ENCODE measurements at regions of chr15 and their contacts with region 1.

Region 1: DNA sequence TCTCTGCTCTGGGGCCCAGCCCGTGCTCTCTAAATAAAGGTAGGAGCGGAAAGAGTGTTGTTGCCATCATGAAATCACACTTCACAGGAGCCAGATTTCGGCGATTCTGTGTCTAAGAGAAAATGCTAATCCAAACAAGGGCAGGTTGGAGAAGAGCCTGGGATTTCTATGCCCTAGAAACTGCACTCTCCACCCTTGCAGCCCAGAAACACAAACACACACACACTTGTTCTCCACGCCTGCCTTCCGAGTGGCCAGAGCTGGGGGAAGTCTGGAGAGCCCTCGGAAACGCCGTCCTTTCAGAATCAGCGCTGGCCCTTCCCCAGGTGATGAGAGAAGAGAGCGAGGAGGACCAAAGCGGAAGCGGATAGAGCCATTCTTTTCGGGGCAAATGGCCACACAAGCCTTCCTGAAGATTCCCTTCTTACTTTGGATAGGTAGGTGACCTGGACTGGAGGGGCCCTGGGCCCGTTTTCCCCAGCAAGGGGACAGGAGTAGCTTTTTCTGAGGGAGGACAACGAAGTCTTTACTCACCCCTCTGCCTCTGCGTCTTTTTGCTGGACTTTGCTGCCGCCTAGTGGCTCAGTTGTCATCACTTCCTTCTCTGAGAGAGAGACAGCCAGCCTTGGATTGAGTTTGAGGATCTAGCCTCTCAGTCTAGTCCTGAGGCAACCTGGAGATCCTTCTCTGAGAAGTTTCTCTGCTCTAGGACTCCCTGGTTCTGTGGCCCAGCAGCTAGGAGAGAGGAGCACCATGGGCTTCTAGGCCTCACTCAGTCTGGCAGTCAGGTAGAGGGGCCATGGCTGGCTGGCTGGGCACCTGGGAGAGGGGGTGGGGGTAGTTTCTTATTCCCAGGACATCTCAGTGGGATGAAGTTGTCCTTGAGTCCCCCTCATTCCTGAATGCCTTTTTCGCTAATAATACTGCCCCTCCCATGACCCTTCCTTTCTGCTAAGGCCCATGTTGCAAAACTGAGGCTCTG is 37.7 kb downstream of the SENP8 start:
- DNase-seq: peak; percentile 60 to 84 (median 66)
- H3K4me3 ChIP-seq: peak overlapping the region; percentile 61
- H3K4me3 Mint-ChIP-seq: peak overlapping the region; percentile 68 to 85 (median 78)
- H3K27ac ChIP-seq: no peak overlapping the region
- H3K27ac Mint-ChIP-seq: peak overlapping the region in 4 of 8 donors; percentile 55 to 91 (median 80)
- H3K4me1 ChIP-seq: no peaks in the 10 kb centered on the region
- H3K4me1 Mint-ChIP-seq: peaks cover 2 to 5% (median 5%) of the 10 kb centered on the region in 3 donors
- H3K27me3 ChIP-seq: no peaks in the 10 kb centered on the region
- H3K27me3 Mint-ChIP-seq: peaks cover under 1 to 2% of the 10 kb centered on the region in 2 donors

Region 2: GRCh38 chr15:71743861-71744382 is 412.0 kb before region 1 on chr15:
- CTCF ChIA-PET with region 1: interaction called, 31 read pairs
- POLR2A ChIA-PET with region 1: no interaction called
- DNase-seq: peak; percentile 29 to 66 (median 39)
- H3K4me3 ChIP-seq: no peak overlapping the region
- H3K4me3 Mint-ChIP-seq: no peak overlapping the region
- H3K27ac ChIP-seq: no peak overlapping the region
- H3K27ac Mint-ChIP-seq: no peak overlapping the region
- H3K4me1 ChIP-seq: no peaks in the 10 kb centered on the region
- H3K4me1 Mint-ChIP-seq: peaks cover 0 to 5% (median 3%) of the 10 kb centered on the region in 3 donors
- H3K27me3 ChIP-seq: no peaks in the 10 kb centered on the region
- H3K27me3 Mint-ChIP-seq: peaks cover 4% of the 10 kb centered on the region in 2 donors

Region 3: DNA sequence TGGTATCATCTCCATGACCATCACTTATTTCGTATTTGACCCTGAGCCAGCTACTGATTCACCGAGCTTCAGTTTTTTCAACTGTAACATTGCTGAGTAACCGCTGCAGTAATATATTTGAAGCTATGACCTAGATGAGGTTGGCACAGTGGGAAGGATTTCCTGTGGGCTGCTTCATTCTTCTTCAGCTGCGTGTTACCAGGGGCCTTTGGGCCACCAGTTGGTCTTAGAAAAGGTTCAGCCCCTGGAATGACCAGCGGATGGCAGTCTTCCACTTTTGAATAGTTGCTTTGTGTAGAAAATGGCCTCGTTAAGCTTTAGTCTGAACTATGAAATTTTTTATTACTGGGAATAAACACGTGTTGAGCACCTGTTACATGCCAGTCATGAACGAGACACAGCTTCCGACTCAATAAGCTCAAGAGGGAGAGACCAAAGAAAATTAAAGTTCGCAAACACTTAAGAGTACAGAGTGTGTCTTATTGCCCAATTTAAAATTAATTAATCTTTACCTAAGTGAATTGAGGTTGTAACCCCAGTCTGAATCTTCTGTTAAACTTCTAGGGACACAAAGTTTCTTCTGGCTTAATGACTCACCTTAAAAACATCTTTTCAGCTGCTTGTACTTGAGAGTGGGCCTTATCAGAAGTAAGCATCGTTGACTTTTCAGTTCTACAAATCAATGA is 403.2 kb before region 1 on chr15:
- CTCF ChIA-PET with region 1: interaction called, 11 read pairs
- POLR2A ChIA-PET with region 1: no interaction called
- DNase-seq: no peak
- H3K4me3 ChIP-seq: no peak overlapping the region
- H3K4me3 Mint-ChIP-seq: no peak overlapping the region
- H3K27ac ChIP-seq: no peak overlapping the region
- H3K27ac Mint-ChIP-seq: no peak overlapping the region
- H3K4me1 ChIP-seq: no peaks in the 10 kb centered on the region
- H3K4me1 Mint-ChIP-seq: peaks cover 0 to 1% (median 0%) of the 10 kb centered on the region in 3 donors
- H3K27me3 ChIP-seq: no peaks in the 10 kb centered on the region
- H3K27me3 Mint-ChIP-seq: peaks cover 3 to 24% of the 10 kb centered on the region in 2 donors

Region 4: DNA sequence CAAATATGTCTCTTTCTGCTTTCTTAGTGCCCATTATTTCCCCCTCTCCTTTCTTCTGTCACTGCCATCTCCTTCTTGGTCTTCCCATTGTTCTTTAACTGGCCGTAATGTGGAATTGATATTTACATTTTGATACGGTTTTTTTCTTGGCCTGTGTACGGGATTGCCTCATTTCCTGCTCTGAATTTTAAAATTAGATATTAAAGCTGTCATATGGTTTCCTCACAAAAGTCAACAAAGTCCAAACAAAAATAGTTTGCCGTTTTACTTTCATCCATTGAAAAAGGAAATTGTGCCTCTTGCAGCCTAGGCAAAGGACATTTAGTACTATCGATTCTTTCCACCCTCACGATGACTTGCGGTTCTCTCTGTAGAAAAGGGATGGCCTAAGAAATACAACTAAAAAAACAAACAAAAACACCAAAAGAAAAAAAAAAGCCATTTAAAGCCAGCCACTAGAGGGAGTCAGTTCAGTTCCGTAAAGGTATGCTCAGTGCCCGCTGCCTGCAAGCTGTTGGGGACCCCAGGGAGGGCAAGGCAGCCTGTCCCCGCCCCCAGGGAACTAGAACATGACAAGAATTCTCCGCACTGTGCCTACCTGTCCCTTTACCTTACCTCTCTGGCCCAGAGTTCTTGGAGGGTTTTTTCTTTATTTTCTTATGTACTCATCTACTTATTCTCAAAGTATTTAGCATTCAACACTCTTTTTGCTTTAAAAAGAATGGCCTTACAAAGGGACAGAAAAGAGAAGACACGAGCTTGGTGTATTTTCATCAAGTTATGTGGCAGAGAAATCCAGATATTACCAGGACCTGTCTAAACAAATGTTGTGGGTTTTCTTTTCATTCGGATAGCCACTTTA is 375.6 kb before region 1 on chr15:
- CTCF ChIA-PET with region 1: interaction called, 28 read pairs
- POLR2A ChIA-PET with region 1: no interaction called
- DNase-seq: peak in 4 of 5 donors; percentile 14 to 33 (median 16)
- H3K4me3 ChIP-seq: no peak overlapping the region
- H3K4me3 Mint-ChIP-seq: no peak overlapping the region
- H3K27ac ChIP-seq: no peak overlapping the region
- H3K27ac Mint-ChIP-seq: no peak overlapping the region
- H3K4me1 ChIP-seq: no peaks in the 10 kb centered on the region
- H3K4me1 Mint-ChIP-seq: peaks cover 5 to 13% (median 7%) of the 10 kb centered on the region in 3 donors
- H3K27me3 ChIP-seq: no peaks in the 10 kb centered on the region
- H3K27me3 Mint-ChIP-seq: peaks cover 12 to 32% of the 10 kb centered on the region in 2 donors

Region 5: DNA sequence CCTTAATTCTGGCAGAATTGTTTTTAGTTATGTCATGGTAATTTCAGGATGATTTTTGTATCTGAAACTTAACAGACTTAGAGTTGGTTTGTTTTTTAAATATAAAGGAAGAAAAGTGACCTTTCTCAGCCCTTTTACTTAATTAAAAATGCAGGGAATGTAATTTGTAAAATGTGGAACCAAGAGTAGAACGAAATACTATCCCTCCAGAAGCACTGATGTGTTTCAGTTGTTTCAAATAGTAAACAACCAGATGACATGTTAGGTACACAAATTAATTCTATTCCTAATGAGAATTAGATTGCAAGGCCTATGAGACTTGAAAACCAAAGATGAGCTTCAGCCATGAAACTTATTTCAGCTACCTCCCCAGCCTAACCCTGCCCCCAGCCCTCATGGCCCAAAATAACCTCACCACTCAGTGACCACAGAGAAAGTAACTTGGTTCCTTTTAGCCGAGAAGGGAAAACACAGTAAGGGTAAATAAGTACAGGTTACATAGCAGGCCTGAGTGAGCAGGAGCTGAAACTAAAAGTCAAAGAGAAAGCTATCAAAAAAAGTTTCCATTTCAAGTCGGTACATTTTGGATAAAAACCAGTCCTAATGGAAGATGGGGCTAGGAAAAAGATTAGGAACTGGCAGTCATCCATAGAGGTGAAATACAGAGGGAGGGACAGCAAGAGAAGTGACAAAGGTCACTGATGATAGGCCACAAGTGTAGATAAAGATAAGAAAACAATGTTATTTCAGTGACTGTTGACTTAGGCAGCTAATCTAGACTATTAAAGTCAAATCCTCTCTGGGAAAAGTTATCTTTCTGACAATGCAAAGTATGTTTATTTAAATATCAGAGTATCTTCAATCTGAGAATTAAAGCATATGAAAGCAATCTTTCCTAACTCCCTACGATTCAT is 14.5 kb before region 1 on chr15:
- CTCF ChIA-PET with region 1: interaction called, 10 read pairs
- POLR2A ChIA-PET with region 1: no interaction called
- DNase-seq: no peak
- H3K4me3 ChIP-seq: no peak overlapping the region
- H3K4me3 Mint-ChIP-seq: no peak overlapping the region
- H3K27ac ChIP-seq: no peak overlapping the region
- H3K27ac Mint-ChIP-seq: peak overlapping the region in 1 of 8 donors; percentile 38
- H3K4me1 ChIP-seq: no peaks in the 10 kb centered on the region
- H3K4me1 Mint-ChIP-seq: peaks cover 0 to 3% (median 0%) of the 10 kb centered on the region in 3 donors
- H3K27me3 ChIP-seq: no peaks in the 10 kb centered on the region
- H3K27me3 Mint-ChIP-seq: no peaks in the 10 kb centered on the region

Region 6: DNA sequence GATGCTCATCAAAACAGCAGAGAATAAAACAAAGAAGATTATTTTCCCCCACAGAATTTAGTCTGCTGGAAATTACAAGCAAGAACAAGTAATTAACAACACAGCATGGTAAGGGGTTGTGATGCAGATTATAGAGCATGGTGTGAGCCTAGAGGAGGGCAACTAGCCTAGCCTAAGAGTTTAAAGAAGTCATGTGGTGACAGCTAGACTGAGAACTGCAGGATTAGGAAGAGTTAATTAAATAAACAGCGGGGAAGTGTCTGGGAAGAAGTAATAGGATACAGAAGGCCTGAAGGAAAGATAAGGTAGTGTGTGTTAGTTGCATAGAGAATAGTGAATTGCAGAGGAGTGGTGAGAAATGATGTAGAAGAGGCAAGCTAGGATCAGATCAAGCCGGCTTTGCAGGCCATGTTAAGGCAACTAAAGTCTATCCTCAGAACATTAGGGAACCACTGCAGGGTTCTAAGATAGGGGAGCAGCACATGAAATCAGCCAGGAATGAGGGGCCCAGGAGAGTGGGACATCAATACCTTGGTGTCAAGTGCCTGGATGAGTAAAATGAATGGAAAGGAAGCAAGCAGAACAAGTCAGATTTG is 86.9 kb after region 1 on chr15:
- CTCF ChIA-PET with region 1: no interaction called
- POLR2A ChIA-PET with region 1: no interaction called
- DNase-seq: no peak
- H3K4me3 ChIP-seq: no peak overlapping the region
- H3K4me3 Mint-ChIP-seq: no peak overlapping the region
- H3K27ac ChIP-seq: no peak overlapping the region
- H3K27ac Mint-ChIP-seq: peak overlapping the region; percentile 6 to 85 (median 53)
- H3K4me1 ChIP-seq: no peaks in the 10 kb centered on the region
- H3K4me1 Mint-ChIP-seq: peaks cover 0 to 1% (median under 1%) of the 10 kb centered on the region in 3 donors
- H3K27me3 ChIP-seq: no peaks in the 10 kb centered on the region
- H3K27me3 Mint-ChIP-seq: no peaks in the 10 kb centered on the region

Measured in CD8-positive, alpha-beta memory T cell (primary cell).